Activated CD4-positive, alpha-beta T cell treated with anti-CD3 and anti-CD28 coated beads for 36 hours (primary cell): ENCODE measurements at regions of chr4 and their contacts with region 1.

Region 1: DNA sequence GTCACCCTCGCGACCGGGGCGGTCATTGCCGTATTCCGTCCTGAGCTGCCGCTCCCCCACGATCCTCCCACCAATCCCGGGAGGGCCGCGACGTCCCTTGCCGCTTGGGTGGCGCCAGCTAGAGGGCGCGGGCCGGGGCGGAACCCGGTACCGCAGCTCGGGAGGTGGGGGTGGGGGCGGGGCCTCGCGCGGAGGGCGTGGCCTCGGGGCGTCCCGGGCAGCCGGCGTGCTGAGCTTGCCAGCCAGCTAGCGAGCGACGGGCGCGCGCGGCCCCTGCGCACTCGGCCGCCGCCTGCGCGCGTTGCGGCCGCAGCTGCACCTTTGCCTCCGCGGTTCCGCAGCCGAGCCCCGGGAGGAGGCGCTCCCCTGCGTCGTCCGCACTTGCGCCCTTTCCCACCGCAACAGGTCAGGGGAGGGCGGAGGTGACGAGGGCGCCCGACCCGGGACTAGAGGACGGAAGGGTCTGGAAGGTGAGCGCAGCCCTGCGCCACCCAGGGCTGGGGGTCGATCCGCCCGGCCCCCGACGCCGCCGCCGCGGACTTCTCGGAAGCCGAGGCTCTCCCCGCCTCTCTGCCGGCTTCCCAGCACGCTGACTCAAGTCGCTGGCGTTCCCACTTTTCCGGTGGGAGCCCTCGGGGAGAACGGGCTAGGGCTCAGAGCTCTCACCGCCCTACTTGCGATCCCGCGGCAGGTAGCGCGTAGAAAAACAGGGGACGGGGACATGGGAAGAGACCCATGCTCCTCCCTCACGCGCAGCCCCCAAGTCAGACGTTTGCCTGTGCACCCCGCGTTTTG is at the start of gene AFF1:
- DNase-seq: peak; percentile 94
- ATAC-seq: peak; percentile 68
- H3K4me3 Mint-ChIP-seq: peak within 1 kb of the TSS; percentile 84
- H3K27ac Mint-ChIP-seq: peak within 1 kb of the TSS; percentile 97
- H3K4me1 Mint-ChIP-seq: peaks cover 40% of the 10 kb centered on the region
- H3K27me3 Mint-ChIP-seq: no peaks in the 10 kb centered on the region
- total RNA-seq, gene AFF1: 47.3 to 57.8 TPM

Region 2: GRCh38 chr4:86957214-86957613 is 22.2 kb after region 1 on chr4:
- CTCF ChIA-PET with region 1: interaction called, 5 read pairs
- POLR2A ChIA-PET with region 1: interaction called, 3 read pairs
- intact Hi-C with region 1: loop called (anchors 1 kb)
- DNase-seq: no peak
- ATAC-seq: peak; percentile 83
- H3K4me3 Mint-ChIP-seq: no peak overlapping the region
- H3K27ac Mint-ChIP-seq: peak overlapping the region; percentile 40
- H3K4me1 Mint-ChIP-seq: peaks cover 53% of the 10 kb centered on the region
- H3K27me3 Mint-ChIP-seq: no peaks in the 10 kb centered on the region

Region 3: DNA sequence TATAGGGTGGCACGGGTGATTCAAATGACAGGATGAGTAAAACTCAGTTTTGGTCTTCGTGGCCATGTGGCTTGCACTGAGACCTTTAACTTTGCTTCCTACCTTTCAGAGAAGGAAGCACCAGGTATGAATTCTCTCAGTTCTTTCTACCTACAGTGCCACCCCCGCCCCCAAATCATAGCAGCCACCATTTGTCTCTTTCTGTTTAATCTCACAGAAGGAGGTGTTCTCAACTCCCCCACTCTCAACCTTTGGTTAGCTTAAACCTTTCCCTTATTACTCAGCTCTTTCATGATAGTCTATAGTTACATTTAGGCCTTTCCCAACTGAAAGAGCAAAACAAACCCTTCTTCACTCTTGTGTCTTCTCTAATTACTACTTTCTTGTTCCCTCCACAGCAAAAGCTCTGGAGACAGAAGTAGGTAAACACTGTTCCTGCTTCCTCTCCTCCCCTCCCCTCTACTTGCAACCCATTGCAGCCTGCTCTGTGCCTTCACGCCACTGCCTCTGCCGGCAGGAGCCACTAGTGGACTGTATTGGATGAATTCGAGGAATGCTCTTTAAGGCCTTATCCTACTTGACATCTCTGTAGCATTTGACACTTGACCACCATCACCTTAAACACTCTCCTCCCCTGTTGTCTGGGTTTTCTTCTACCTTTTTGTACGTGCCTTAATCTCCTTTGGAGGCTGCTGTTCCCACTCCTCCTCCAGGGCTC is 123.5 kb after region 1 on chr4:
- CTCF ChIA-PET with region 1: no interaction called
- POLR2A ChIA-PET with region 1: interaction called, 4 read pairs
- intact Hi-C with region 1: loop called (anchors 1 kb)
- DNase-seq: peak; percentile 79
- ATAC-seq: peak; percentile 80
- H3K4me3 Mint-ChIP-seq: peak overlapping the region; percentile 0
- H3K27ac Mint-ChIP-seq: peak overlapping the region; percentile 74
- H3K4me1 Mint-ChIP-seq: peaks cover 69% of the 10 kb centered on the region
- H3K27me3 Mint-ChIP-seq: no peaks in the 10 kb centered on the region

Region 4: GRCh38 chr4:87093443-87094123 is 158.6 kb after region 1 on chr4:
- CTCF ChIA-PET with region 1: interaction called, 30 read pairs
- POLR2A ChIA-PET with region 1: interaction called, 4 read pairs
- intact Hi-C with region 1: loop called (anchors 1 kb)
- DNase-seq: peak; percentile 60
- ATAC-seq: peak; percentile 79
- H3K4me3 Mint-ChIP-seq: no peak overlapping the region
- H3K27ac Mint-ChIP-seq: peak overlapping the region; percentile 78
- H3K4me1 Mint-ChIP-seq: peaks cover 52% of the 10 kb centered on the region
- H3K27me3 Mint-ChIP-seq: no peaks in the 10 kb centered on the region

Region 5: DNA sequence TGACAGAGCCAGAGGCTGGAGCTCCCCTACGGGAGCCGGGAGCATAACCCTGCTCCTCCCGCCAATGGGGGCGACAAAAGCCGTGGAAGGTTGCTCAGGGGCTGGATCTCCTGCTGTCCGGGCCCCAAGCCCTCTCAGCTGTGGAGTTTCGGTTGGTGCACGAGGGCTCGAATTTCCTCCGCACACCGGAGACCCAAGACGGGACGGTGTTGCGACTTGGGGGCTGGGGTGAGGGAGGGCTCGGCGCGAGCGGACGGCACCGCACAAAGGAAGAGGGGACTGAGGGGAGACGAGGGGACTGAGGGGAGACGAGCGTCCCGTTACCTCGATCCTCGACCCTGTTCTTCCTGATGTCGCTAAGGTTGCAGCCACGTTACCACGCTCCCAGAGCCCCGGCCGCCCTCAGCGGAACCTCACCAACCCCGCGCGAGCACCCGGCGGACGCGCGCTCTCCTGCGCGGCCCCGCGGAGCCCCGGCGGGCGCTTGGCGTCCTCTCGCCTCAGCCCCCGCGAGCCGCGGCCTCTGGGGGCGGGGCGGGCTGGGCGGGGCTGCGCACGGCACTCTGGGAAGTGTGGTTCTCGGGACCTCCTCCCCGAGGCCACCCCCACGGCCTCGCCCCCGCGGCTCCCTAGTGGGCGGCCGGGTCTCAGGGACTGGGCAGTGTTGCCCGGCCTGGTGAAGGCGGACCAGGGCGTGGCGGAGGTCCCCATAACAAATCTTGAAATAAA is 285.3 kb after region 1 on chr4 and contains the start of gene KLHL8:
- CTCF ChIA-PET with region 1: interaction called, 6 read pairs
- POLR2A ChIA-PET with region 1: interaction called, 5 read pairs
- intact Hi-C with region 1: loop called (anchors 1 to 5 kb)
- DNase-seq: peak; percentile 92
- ATAC-seq: peak; percentile 91
- H3K4me3 Mint-ChIP-seq: peak within 1 kb of the TSS; percentile 89
- H3K27ac Mint-ChIP-seq: peak within 1 kb of the TSS; percentile 92
- H3K4me1 Mint-ChIP-seq: peaks cover 17% of the 10 kb centered on the region
- H3K27me3 Mint-ChIP-seq: peaks cover 2% of the 10 kb centered on the region
- total RNA-seq, gene KLHL8: 9.8 to 10.3 TPM